ENCODE measurements at regions of chr2 and their contacts with region 1.

Region 1: DNA sequence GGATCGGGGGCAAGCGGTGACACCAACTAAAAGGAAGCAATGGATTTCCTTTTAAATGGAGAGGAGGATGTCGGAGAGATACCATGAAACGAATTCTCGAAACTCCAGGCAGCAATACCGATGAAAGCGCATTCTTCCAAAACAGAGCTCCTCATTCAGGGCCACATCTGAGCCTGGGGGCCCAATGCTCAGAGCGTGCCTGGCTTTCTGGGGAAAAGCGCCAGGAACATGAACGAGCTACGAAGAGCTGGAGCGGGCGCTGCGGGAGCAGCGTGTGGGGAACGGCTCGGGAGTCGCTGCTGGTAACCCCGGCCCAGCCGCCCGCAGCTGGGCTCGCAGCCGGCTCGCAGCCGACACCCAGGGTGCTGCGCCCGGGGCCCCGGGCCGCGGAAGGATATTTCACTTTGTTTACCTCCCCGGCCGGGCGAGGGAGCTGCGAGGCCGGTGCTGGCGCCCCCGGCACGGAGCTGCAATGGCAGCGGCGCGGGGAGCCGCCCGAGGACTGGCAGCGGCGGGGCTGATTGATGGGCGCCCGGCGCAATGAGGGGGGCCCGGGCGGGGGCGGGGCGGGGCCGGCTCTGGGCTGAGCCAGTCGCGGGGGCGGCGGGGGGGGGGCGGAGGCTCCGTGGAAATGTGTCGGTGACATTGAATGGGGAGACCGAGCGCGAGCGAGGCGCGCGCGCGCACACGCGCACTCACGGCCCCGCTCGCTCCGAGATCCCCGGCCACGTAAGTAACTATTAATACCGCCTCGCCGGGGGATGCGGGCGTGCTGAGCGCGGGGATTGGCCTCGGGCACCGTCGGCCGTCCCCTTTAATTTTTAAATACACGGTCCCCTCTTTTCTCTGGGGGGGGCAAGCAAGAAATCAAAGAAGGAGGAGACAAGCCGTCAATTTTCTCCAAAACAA is at the start of gene TRIB2:
- DNase-seq: peak; percentile 81
- H3K4me3 ChIP-seq: peak within 1 kb of the TSS; percentile 76 to 89 (median 87)
- H3K27ac ChIP-seq: peak within 1 kb of the TSS; percentile 83
- H3K4me1 ChIP-seq: peaks cover 36% of the 10 kb centered on the region
- H3K27me3 ChIP-seq: no peaks in the 10 kb centered on the region
- CTCF ChIP-seq: no peak
- total RNA-seq, gene TRIB2: 9.0 to 30.7 TPM

Region 2: DNA sequence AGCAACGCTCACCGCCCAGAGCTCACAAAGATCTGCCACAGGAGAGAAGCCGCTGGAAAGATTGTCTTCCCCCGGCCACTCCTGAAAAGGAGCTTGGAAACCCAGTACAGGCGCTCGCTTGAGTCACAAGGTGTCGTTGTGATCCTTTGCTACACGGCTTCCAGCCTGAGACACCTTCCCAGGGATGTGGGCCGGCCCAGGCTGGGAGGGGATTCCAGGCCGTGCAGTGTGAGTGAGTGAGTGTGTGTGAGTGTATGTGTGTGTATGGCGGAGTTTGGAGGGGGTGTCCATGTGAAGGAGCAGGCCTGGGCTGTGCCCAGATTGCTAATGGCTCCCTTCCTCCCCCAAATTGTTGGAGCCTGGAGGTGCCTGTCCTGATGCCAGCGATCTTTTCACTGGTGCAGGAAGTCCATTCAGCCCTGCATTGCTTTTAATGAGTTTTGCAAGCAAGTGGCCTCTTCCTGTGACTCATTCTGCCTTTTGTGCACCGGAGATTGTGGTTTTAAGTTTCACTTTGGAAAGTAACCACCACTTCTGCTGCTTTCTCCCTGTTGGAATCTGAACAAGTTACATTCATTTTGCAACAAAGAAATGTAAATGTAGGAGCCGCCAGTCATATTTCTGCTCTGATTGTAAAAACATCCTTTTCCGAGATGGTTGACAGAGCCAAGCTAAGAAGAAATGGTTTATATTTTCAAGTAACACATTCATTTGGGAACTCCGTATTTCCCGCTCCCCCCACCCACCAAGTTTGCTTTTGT is 886.4 kb before region 1 on chr2:
- CTCF ChIA-PET with region 1: interaction called, 3 read pairs
- dilution Hi-C with region 1: no loop called
- in situ Hi-C with region 1: loop called (anchors 10 kb)
- intact Hi-C with region 1: loop called (anchors 1 kb)
- DNase-seq: peak; percentile 98
- H3K4me3 ChIP-seq: peak overlapping the region; percentile 26 to 39 (median 35)
- H3K27ac ChIP-seq: peak overlapping the region; percentile 83
- H3K4me1 ChIP-seq: peaks cover 37% of the 10 kb centered on the region
- H3K27me3 ChIP-seq: no peaks in the 10 kb centered on the region
- CTCF ChIP-seq: peak; percentile 32 to 71

Region 3: DNA sequence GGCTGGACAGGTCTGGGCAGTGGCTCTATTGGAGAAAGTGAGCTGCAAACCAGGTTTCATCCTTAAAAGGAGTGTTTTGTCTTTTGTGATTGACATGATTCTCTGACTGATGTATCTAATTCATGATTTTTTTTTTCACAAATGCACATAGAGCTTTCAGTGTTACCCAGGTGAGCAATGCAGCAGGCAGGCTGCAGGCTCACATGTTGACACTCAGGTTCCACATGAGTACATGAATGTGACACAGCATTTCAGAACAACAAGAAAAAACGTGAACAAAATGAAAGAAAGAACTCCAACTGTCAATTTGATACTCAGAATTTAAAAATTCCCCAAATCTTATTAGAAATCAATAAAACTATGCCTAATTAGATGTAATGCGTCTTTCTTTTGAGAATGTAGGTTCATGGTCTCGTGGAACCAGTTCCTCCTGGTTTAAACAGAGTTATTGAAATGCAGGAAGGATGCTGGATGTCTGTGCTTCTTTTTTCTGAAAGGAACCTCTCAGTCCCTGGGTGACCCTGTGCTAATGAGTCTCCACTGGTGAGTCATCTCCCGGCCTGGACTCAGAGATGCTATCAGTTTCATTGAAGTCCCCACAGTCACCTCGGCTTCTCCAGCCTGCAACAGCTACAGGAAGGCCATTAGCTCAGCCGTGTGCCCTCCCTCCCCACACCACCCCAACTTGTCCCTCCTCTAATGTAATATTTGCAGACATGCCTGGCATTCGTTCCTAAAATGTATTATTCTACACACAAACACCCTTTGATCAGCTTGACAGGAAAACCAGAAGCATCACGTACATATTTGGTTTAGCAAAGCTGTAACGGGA is 539.7 kb before region 1 on chr2:
- CTCF ChIA-PET with region 1: interaction called, 4 read pairs
- dilution Hi-C with region 1: no loop called
- in situ Hi-C with region 1: no loop called
- intact Hi-C with region 1: loop called (anchors 2 kb)
- DNase-seq: peak; percentile 49
- H3K4me3 ChIP-seq: no peak overlapping the region
- H3K27ac ChIP-seq: no peak overlapping the region
- H3K4me1 ChIP-seq: peaks cover 20% of the 10 kb centered on the region
- H3K27me3 ChIP-seq: no peaks in the 10 kb centered on the region
- CTCF ChIP-seq: no peak

Region 4: DNA sequence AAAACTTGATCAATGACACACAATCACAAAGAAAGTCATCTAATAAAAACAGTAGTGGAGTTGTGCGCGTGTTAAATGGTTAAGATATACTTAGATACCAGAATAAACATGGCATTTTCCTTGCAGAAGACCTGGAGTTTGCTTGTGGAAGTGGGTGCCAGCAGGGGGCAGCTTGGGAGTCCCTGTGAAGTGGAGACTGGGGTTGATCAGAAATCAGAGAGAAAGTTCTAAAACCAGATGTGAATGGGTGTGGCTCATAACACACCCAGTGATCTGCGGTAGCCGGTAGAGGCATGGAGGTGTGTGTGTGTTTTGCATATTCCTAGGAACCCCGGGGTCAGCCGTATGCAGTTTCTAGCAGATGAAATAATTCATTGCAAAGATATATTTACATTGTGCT is 299.9 kb before region 1 on chr2:
- CTCF ChIA-PET with region 1: no interaction called
- dilution Hi-C with region 1: no loop called
- in situ Hi-C with region 1: loop called in 1 of 2 experiments (anchors 10 kb)
- intact Hi-C with region 1: loop called (anchors 1 kb)
- DNase-seq: no peak
- H3K4me3 ChIP-seq: no peak overlapping the region
- H3K27ac ChIP-seq: no peak overlapping the region
- H3K4me1 ChIP-seq: no peaks in the 10 kb centered on the region
- H3K27me3 ChIP-seq: peaks cover 2% of the 10 kb centered on the region
- CTCF ChIP-seq: peak; percentile 38 to 50

Region 5: GRCh38 chr2:12507295-12507694 is 209.2 kb before region 1 on chr2:
- CTCF ChIA-PET with region 1: no interaction called
- dilution Hi-C with region 1: no loop called
- in situ Hi-C with region 1: no loop called
- intact Hi-C with region 1: loop called (anchors 1 kb)
- DNase-seq: peak; percentile 99
- H3K4me3 ChIP-seq: no peak overlapping the region
- H3K27ac ChIP-seq: no peak overlapping the region
- H3K4me1 ChIP-seq: peaks cover 34% of the 10 kb centered on the region
- H3K27me3 ChIP-seq: no peaks in the 10 kb centered on the region
- CTCF ChIP-seq: no peak

Region 6: DNA sequence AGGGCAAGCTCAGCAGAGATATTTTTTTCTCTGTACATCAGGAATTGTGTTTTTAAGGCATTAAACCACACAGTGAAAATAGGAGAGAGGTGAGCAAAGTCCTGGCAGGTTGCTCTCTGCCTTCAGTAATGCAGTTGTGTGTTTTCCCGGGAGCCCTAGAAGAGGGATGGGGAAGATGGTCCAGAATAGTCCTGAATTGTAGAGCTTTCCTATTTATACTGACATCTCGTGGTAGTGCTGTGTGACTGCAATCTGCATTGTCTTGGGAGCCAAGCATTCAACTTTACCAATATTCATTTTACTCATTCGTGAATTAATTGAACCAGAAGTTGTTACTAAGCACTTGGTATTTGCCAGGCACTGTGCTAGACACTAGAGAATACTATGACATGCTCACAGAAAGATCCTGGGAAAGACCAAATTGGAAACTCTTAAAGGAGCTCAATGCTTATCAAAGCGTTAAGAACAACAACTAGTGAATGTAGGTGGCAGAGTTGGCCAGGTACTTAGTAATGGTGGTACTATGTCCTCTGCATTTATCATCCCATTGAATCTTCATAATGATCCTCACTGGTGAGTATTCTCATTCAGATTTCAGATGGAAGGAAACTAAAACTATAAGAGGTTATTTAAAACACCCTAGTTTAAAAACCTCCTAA is 214.8 kb after region 1 on chr2:
- CTCF ChIA-PET with region 1: interaction called, 16 read pairs
- dilution Hi-C with region 1: no loop called
- in situ Hi-C with region 1: no loop called
- intact Hi-C with region 1: loop called (anchors 1 kb)
- DNase-seq: peak; percentile 35
- H3K4me3 ChIP-seq: no peak overlapping the region
- H3K27ac ChIP-seq: no peak overlapping the region
- H3K4me1 ChIP-seq: peaks cover 23% of the 10 kb centered on the region
- H3K27me3 ChIP-seq: no peaks in the 10 kb centered on the region
- CTCF ChIP-seq: peak; percentile 88 to 96

Measured in mammary epithelial cell (primary cell).